ENCODE measurements at regions of chr12 and their contacts with region 1.

Region 1: DNA sequence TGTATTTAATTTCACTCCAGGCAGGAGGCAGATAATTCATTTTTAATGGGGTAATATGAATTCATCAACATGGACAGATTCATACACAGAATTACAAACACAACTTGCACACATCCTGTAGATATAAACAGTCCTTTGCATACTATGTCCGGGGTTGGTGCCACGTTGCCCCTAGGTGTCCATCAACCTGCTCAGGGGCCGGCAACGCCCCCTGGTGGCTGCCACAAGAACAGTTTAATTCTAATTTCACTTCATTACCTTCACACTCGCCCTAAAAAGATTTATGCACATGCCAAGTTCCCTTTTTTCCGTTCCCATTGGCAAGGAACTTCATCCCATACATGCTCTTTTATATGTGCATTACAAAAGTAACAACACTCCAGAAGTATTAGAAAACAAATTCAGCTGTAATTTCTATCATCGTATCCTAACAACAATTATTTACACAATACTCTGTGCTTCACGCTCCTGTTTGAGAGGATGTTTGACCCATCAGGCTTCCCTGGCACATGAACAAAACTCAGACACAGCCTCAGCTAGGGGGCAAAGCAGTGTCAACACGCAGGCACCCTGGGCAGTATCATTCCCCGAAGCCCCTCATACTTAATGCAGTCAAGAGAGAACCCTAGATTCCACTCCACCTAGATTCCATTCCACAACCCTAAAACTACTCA is 15.5 kb downstream of the MANSC1 start:
- DNase-seq: peak; percentile 88
- H3K4me3 Mint-ChIP-seq: no peak overlapping the region
- H3K27ac Mint-ChIP-seq: peak overlapping the region; percentile 18
- H3K4me1 Mint-ChIP-seq: peaks cover 36% of the 10 kb centered on the region
- H3K27me3 Mint-ChIP-seq: peaks cover 9% of the 10 kb centered on the region

Region 2: GRCh38 chr12:12039897-12040296 is 294.6 kb before region 1 on chr12:
- intact Hi-C with region 1: loop called (anchors 5 kb)
- DNase-seq: no peak
- H3K4me3 Mint-ChIP-seq: no peak overlapping the region
- H3K27ac Mint-ChIP-seq: no peak overlapping the region
- H3K4me1 Mint-ChIP-seq: peaks cover 10% of the 10 kb centered on the region
- H3K27me3 Mint-ChIP-seq: peaks cover 3% of the 10 kb centered on the region

Region 3: DNA sequence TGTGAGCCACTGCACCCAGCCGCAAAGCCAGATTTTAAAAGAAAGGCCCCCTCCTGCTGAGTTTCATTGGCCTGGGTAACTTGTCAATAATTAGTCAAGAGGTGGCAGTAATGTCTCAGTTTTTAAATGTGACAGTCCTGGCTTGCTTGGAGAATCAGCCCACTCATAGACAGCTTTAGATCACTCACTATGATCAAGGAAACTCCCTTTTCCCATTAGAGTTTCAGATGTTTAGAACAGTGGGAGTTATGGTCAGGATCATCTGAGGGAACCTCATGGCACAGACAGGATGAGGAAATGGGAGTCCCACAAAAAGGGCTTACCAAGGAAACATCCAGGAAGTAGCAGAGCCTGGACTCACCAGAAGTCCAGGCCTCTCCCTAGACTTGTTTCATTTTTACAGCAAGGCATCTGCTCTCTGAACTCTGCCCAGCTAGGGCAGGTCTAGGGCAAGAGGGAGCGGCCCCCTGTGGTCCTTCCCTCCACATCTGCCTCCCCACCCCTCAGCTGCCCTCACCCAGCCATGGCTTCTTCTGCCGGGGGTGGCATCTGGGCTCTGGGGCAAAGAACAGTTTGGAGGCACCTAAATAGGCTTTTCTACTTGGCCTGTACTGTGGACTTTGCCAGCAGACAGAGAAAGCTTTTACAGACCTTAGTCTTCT is 252.5 kb before region 1 on chr12:
- intact Hi-C with region 1: loop called (anchors 2 kb)
- DNase-seq: peak; percentile 60
- H3K4me3 Mint-ChIP-seq: no peak overlapping the region
- H3K27ac Mint-ChIP-seq: no peak overlapping the region
- H3K4me1 Mint-ChIP-seq: peaks cover 5% of the 10 kb centered on the region
- H3K27me3 Mint-ChIP-seq: no peaks in the 10 kb centered on the region

Region 4: GRCh38 chr12:12266873-12267741 is 67.4 kb before region 1 on chr12 and contains the start of gene LRP6:
- intact Hi-C with region 1: loop called (anchors 10 kb)
- DNase-seq: peak; percentile 90
- H3K4me3 Mint-ChIP-seq: peak within 1 kb of the TSS; percentile 89
- H3K27ac Mint-ChIP-seq: peak within 1 kb of the TSS; percentile 71
- H3K4me1 Mint-ChIP-seq: peaks cover 14% of the 10 kb centered on the region
- H3K27me3 Mint-ChIP-seq: peaks cover 49% of the 10 kb centered on the region
- total RNA-seq, gene LRP6: 5.8 and 8.4 TPM in 2 replicates